GM18951 (cell line): ENCODE measurements at regions of chrX and their contacts with region 1.

Region 1: DNA sequence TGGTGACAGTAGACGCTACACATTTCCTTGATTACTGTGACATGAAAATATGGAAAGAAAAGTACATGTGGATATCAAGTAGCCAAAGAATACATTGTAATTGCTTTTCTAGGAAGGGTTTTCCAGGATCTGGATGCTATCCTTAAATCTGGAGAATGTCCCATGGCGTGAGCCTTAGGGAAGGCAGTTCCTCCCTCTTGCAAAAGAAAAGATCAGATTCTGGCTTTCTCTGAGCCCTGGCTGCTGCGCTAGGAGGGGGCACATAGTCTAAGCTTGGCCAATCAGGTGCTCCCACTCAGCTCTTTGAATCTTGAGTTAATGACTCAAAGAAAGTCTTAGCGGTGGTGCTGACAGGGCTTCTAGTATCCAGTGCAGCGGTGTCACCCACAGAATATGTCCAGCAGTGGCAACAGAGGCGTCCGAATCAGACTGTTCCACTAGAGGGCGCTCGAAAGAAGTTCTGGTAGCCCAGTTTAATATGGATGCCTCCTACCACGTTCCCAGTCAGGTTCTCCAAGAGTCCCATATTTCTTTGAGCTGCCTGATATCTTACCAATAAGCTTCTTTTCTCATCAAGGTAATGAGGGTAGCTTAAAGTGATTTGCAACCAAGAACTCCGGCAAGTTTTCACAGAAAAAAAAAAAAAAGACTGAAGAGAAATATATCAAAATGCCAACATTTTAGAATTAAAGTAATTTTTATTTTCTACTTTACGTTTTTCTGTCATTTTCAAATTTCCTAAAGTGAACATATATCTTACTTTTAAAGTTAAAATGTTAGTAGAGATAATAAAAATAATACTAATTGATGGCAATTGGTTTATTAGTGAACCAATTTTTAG is 213.4 kb upstream of the S100G start:
- POLR2A ChIP-seq: no peak

Region 2: DNA sequence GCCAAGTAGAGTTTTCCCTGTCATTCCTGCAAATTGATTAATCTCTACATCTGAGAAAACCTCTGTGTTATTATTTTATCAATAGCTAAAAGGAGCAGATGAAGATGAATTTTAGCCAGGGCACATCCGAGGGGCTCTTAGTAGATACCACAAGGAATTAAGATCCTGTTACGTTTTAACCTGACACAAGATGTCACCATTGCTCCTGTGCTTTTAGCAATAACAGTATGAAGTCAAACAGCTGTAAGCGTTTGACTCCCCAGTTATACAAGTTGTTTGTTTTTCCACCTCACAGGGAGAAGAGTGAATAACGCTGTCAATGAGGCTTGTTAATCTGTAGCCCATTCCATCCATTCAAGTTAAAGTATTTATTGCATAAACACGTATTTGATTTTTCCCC is 506.0 kb before region 1 on chrX:
- in situ Hi-C with region 1: loop called (anchors 25 kb)
- POLR2A ChIP-seq: no peak

Region 3: DNA sequence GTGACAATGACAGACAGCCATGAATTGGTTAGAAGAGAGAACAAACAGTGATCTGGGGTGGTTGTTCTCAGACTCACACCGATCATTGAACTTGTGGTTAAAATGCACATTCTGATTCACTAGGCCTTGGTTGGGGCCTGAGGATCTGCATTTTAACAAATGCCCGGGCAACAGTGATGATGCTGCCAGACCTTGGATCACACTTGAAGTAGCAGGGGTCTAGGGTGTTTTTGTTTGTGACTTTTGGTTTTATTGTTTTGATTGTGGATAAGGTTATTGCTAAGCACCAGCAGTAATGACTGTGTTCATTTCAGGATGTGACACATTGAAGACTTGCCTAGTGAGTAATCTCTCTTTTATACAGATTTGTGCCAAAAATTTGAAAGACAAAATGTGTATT is 386.2 kb after region 1 on chrX:
- in situ Hi-C with region 1: no loop called
- POLR2A ChIP-seq: no peak